ENCODE measurements at regions of chr2 and their contacts with region 1.

Region 1: DNA sequence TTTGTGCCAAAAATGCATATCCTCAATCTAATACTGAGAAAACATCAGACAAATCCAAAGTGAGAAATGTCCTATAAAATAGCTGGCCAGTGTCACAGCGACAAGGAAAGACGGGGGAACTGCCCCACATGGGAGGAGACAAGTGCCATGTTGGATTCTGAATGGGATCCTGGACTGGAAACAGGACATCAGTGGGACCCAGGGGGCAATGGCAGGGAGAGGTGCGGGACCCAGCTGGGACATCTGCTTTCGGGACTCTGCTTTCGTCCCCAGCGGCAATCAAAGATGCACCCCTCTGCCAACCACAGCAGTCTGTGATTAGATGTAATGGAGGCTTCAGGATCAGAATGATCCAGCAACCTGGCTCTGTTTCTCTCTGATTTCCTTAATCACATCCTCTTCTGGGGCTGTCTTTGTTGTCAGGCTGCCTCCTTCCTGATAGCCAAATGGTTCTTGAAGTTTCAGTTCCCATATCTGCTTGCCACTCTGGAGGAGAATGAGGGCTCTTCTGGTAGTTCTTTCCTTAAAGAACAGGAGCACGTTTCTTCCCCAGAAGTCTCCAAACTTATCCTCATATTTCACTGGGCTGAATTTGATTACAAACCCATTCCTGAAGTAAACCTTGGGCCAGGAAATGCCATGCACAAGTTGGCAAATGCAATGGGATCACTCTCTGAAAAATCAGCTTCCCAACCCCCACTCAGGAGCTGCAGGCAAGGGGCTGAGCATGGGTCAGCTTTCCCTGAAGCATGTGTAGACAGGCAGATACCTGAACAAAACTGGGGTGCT is 13.6 kb upstream of the PROC start:
- DNase-seq: no peak
- ATAC-seq: no peak
- H3K4me3 ChIP-seq: no peak overlapping the region
- H3K27ac ChIP-seq: no peak overlapping the region
- H3K4me1 ChIP-seq: peaks cover 16 to 27% of the 10 kb centered on the region in 2 experiments
- H3K27me3 ChIP-seq: no peaks in the 10 kb centered on the region
- CTCF ChIP-seq: no peak
- EP300 ChIP-seq: no peak
- POLR2A ChIP-seq: no peak
- RAD21 ChIP-seq: no peak

Region 2: DNA sequence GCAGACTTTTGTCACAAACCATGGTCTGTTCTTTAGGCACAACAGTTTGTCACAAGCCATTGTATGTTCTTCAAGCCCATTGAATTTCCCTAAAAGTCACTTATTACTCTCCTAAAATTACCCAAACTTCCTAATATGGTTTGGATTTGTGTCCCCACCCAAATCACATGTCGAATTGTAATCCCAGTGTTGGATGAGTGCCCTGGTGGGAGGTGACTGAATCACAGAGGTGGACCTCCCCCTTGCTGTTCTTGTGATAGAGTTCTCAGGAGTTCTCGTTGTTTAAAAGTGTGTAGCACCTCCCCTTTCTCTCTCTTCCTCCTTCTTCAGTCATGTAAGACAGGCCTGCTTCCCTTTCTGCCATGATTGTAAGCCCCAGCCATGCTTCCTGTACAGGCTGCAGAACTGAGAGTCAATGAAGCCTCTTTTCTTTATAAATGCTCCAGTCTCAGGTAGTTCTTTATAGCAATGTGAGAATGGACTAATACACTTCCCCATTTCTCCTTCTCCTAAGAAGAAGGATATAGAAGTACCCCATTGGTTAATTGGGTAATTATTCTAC is 759.9 kb before region 1 on chr2:
- CTCF ChIA-PET with region 1: no interaction called
- POLR2A ChIA-PET with region 1: no interaction called
- in situ Hi-C with region 1: no loop called
- intact Hi-C with region 1: no loop called
- DNase-seq: peak; percentile 44 to 89 (median 50)
- ATAC-seq: peak; percentile 79
- H3K4me3 ChIP-seq: peak overlapping the region; percentile 18; the same call in 1 of the 2 replicates
- H3K27ac ChIP-seq: peak overlapping the region; percentile 66
- H3K4me1 ChIP-seq: peaks cover 27 to 76% of the 10 kb centered on the region in 2 experiments
- H3K27me3 ChIP-seq: no peaks in the 10 kb centered on the region
- CTCF ChIP-seq: no peak
- EP300 ChIP-seq: peak; percentile 39; the same call in 1 of the 2 replicates
- POLR2A ChIP-seq: 0 out of 2 replicates have a peak, but pooled peaks have one; percentile 37
- RAD21 ChIP-seq: no peak

Region 3: DNA sequence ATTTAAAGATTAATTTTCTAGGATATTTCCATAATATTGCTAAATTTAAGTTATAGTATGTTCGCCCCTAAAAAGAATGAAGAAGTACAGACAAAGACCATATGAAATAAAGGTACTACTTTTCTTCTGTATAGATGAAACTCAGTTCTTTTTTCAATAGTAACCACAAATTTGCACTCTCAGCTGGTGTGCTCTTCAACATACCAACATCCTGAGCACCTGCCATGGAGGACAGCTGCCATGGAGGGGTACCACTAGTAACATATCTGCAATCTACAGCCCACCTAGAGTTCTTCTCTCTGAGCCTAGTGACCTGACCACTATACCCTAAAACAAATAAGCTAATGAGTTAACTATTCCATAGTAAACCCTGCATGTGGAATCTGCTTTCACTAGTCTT is 73.9 kb before region 1 on chr2:
- CTCF ChIA-PET with region 1: no interaction called
- POLR2A ChIA-PET with region 1: no interaction called
- in situ Hi-C with region 1: no loop called
- intact Hi-C with region 1: no loop called
- DNase-seq: no peak
- ATAC-seq: no peak
- H3K4me3 ChIP-seq: no peak overlapping the region
- H3K27ac ChIP-seq: no peak overlapping the region
- H3K4me1 ChIP-seq: no peaks in the 10 kb centered on the region
- H3K27me3 ChIP-seq: no peaks in the 10 kb centered on the region
- CTCF ChIP-seq: no peak
- EP300 ChIP-seq: no peak
- POLR2A ChIP-seq: no peak
- RAD21 ChIP-seq: no peak

Region 4: GRCh38 chr2:127389778-127390435 is 14.8 kb before region 1 on chr2:
- CTCF ChIA-PET with region 1: no interaction called
- POLR2A ChIA-PET with region 1: interaction called, 3 read pairs
- in situ Hi-C with region 1: no loop called
- intact Hi-C with region 1: loop called (anchors 2 kb)
- DNase-seq: no peak
- ATAC-seq: no peak
- H3K4me3 ChIP-seq: no peak overlapping the region
- H3K27ac ChIP-seq: no peak overlapping the region
- H3K4me1 ChIP-seq: peaks cover 20 to 42% of the 10 kb centered on the region in 2 experiments; a peak in 4 of 5 replicates
- H3K27me3 ChIP-seq: no peaks in the 10 kb centered on the region; a peak in 1 of 5 replicates
- CTCF ChIP-seq: no peak
- EP300 ChIP-seq: no peak
- POLR2A ChIP-seq: no peak
- RAD21 ChIP-seq: no peak